WTC11 (cell line): ENCODE measurements at regions of chr15 and their contacts with region 1.

Region 1: DNA sequence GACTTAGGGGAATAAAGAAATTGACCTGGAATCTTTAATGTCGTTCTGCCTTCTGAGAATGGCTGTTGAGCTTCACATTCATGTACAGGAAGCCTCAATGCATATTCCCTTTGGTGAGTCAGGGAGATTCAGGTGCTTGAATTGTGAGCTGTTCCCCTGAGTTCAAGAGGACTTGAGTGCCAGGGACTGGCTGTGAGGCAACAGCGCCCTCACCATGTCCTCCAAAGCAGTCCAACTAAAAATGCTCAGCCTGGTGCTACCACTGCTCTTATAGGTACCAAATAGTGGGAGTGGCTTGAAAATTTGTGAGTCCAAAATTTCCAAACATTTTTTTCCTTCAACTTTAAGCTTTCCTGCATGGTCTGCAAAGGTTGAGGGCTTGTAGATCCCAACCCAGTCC is 54.1 kb downstream of the LEO1 start:
- DNase-seq: peak; percentile 66
- ATAC-seq: peak; percentile 100
- H3K4me3 Mint-ChIP-seq: no peak overlapping the region
- H3K27ac Mint-ChIP-seq: peak overlapping the region; percentile 65; the same call in 1 of the 2 replicates
- H3K4me1 Mint-ChIP-seq: no peaks in the 10 kb centered on the region
- H3K27me3 Mint-ChIP-seq: no peaks in the 10 kb centered on the region
- CTCF ChIP-seq: no peak; the same call in 1 of the 2 replicates

Region 2: GRCh38 chr15:51672155-51672687 is 245.3 kb before region 1 on chr15:
- CTCF ChIA-PET with region 1: no interaction called
- POLR2A ChIA-PET with region 1: no interaction called
- DNase-seq: no peak
- ATAC-seq: peak; percentile 81
- H3K4me3 Mint-ChIP-seq: no peak overlapping the region
- H3K27ac Mint-ChIP-seq: no peak overlapping the region
- H3K4me1 Mint-ChIP-seq: peaks cover 11% of the 10 kb centered on the region
- H3K27me3 Mint-ChIP-seq: peaks cover 7% of the 10 kb centered on the region
- CTCF ChIP-seq: no peak

Region 3: DNA sequence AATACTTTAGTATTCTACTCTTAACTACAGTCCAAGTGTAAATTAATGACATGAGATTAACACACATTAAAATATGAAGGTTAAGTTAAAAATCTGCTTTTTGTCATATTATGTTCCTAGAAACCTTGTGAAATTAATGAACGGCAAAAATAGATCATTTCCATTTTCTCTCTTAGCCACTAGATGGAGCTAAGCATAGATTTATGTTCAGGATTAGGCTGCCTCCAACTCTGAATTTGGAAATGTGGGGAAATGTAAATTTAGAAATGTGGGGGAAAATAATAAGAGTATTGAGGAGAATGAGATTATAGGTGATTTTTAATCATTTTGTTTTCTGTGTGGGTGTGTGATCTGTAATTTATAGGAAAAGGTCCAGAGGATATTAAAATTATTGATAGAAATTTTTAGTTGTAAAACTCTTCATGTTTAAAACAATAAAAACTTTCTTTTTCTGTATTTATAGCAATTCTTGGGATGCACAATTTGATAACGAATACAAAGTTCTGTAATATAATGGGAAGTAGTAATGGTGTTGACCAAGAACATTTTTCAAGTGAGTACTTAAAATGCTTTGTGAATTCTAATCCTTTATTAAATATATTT is 28.8 kb before region 1 on chr15:
- CTCF ChIA-PET with region 1: interaction called, 10 read pairs
- POLR2A ChIA-PET with region 1: no interaction called
- DNase-seq: no peak
- ATAC-seq: no peak
- H3K4me3 Mint-ChIP-seq: no peak overlapping the region
- H3K27ac Mint-ChIP-seq: no peak overlapping the region
- H3K4me1 Mint-ChIP-seq: no peaks in the 10 kb centered on the region
- H3K27me3 Mint-ChIP-seq: no peaks in the 10 kb centered on the region
- CTCF ChIP-seq: no peak

Region 4: DNA sequence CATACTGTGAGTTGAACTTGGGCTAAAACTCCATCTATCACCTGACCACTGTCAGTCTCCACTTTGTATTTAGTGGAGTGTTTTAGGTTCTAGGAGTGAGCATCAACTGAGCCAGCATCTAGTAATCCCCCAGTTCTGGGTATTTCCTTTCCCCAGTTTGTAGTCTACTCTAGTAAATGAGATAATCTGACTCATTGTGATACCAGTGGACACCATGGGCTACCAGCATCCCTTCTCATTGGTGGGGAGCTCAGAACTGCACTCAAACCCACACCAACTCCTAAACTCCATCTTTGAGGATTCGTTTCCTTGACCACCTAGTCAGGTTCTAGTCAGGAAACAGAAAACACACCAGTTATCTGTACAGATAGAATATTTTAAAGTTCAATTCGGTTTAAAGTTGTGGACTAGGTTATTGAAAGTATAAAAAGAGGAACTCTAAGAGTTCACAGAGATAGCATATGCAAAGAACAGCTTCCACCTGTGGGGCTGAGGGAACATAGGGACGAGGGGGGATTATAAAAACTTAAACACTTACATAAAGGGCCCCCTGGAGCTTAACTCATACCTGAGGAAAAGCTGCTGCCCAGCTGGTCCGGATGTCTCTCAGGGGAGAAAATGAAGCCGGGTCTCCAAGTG is 18.1 kb after region 1 on chr15:
- CTCF ChIA-PET with region 1: interaction called, 17 read pairs
- POLR2A ChIA-PET with region 1: no interaction called
- DNase-seq: no peak
- ATAC-seq: no peak
- H3K4me3 Mint-ChIP-seq: peak overlapping the region; percentile 40
- H3K27ac Mint-ChIP-seq: no peak overlapping the region
- H3K4me1 Mint-ChIP-seq: peaks cover 4% of the 10 kb centered on the region
- H3K27me3 Mint-ChIP-seq: no peaks in the 10 kb centered on the region
- CTCF ChIP-seq: no peak